Heart left ventricle (tissue), 16 donors: ENCODE measurements at regions of chr2 and their contacts with region 1.

Region 1: DNA sequence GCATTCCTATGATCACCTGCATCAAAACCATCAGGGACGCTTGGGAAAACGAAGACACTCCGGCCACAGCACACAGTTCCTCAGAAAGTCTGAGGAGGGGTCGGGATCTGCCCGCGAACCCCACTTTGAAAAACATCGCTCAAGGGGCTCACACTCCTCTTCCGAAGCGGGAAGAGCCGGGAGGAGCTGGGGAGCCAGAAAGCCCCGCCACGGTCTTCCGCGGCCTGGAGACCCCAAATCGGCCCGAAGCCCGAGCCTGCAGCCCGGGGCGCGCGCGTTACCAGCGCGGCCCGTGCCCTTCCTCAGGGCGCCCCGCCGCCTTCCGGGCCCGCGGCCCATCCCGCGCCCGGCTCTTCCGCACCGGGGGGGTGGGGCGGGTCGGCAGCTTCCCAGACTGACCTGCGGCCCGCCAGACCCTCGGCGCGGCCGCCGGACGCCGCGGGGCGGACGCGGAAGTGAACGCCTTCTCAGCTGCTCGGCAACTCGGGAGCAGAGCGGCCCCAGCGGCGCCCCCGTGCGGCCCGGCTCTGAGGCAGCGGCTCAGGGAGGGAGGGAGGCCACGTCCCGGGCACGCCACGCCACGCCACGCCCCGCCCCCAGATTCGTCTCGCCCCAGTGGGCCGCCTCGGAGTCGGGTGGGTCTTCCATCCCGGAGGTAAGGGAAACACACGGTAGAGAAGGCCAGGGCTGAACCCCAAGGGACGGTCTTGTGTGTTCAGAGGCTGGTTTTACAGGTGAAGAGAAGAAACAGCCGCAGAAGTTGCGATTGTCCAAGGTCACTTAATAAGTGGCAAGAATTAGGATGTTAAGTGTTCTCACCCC is at the start of gene KCTD18:
- DNase-seq: peak; percentile 92 to 98 (median 95)
- ATAC-seq: peak; percentile 97 to 100 (median 98)
- H3K4me3 ChIP-seq: peak within 1 kb of the TSS; percentile 59 to 95 (median 82)
- H3K27ac ChIP-seq: peak within 1 kb of the TSS; percentile 75 to 96 (median 87)
- H3K4me1 ChIP-seq: peaks cover 0 to 15% (median 5%) of the 10 kb centered on the region in 12 donors
- H3K27me3 ChIP-seq: no peaks in the 10 kb centered on the region
- CTCF ChIP-seq: peak; percentile 69 to 96 (median 90)
- POLR2A ChIP-seq: peak in 1 of 2 donors; percentile 91
- total RNA-seq, gene KCTD18: 8.8 to 16.0 (median 11.8) TPM

Region 2: DNA sequence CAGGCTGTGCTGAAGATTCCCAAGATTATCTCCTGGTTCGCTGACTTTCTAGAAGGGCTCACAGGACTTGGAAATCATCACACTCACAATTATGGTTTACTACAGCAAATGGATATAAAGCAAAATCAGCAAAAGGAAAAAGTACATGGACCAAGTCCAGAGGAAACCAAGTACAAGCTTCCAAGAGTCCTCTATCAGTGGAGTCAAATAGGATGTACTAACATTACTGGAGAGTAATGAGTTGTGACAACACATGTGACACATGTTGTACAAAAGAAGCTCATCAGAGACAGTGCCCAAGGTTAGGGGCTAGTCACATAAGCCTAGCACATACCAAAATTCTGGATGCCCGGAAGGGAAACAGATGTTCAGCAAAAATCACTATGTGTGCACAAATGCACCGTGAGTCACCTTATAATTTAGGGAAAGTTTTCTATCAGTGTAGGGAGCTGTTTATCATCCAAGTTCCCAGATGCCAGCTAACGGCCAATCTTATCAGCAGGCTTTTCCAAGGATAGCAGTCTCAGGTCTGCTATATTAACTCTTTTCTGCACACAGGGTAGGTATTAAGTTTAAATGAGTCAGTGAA is 1123.9 kb after region 1 on chr2:
- intact Hi-C with region 1: loop called in 1 of 10 experiments (anchors 10 kb)
- DNase-seq: no peak
- ATAC-seq: no peak
- H3K4me3 ChIP-seq: no peak overlapping the region
- H3K27ac ChIP-seq: no peak overlapping the region
- H3K4me1 ChIP-seq: peaks cover 0 to 4% (median 0%) of the 10 kb centered on the region in 12 donors
- H3K27me3 ChIP-seq: no peaks in the 10 kb centered on the region
- CTCF ChIP-seq: no peak
- POLR2A ChIP-seq: no peak